Naive thymus-derived CD4-positive, alpha-beta T cell (primary cell): ENCODE measurements at regions of chr1 and their contacts with region 1.

Region 1: DNA sequence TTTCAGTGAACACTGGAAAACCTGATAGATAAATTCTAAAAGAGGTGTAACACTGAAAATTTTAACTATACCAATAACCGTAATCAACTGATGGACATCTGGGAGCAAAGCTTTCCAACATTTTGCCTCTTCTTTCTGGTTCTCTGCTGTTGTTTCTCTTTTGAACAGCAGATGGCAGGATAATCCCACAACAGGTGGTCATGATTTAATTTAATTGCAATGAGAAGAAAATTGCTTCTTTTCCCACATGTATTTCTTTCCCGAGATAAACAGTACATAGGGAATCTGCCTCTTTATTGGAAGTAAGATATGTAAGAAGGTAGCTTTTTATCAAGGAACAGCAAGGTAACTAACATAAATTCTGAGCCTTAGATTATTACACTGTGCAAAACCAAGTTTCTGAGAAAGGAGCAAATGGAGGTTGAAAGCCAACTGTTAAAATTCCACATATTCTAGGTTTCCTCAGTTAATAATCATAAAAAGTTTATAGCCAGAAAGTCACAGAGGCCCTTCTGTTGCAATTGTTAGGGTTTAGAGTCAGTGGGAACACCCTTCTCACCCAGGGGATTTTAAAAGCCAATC is 72.9 kb downstream of the RPS6KA1 start:
- DNase-seq: peak in 7 of 9 donors; percentile 43 to 73 (median 65)
- ATAC-seq: peak; percentile 71
- H3K4me3 ChIP-seq: no peak overlapping the region
- H3K4me3 Mint-ChIP-seq: peak overlapping the region in 1 of 10 donors; percentile 41
- H3K27ac ChIP-seq: no peak overlapping the region
- H3K27ac Mint-ChIP-seq: peak overlapping the region in 2 of 9 donors; percentile 21 to 72
- H3K4me1 ChIP-seq: peaks cover 0 to 3% of the 10 kb centered on the region in 2 donors
- H3K4me1 Mint-ChIP-seq: peaks cover 0 to 16% (median 9%) of the 10 kb centered on the region in 7 donors
- H3K27me3 ChIP-seq: no peaks in the 10 kb centered on the region
- H3K27me3 Mint-ChIP-seq: peaks cover 0 to 9% (median 0%) of the 10 kb centered on the region in 5 donors

Region 2: GRCh38 chr1:26210147-26210870 is 392.2 kb before region 1 on chr1:
- CTCF ChIA-PET with region 1: no interaction called
- POLR2A ChIA-PET with region 1: no interaction called
- intact Hi-C with region 1: no loop called
- DNase-seq: no peak
- ATAC-seq: no peak
- H3K4me3 ChIP-seq: no peak overlapping the region
- H3K4me3 Mint-ChIP-seq: no peak overlapping the region
- H3K27ac ChIP-seq: no peak overlapping the region
- H3K27ac Mint-ChIP-seq: no peak overlapping the region
- H3K4me1 ChIP-seq: no peaks in the 10 kb centered on the region
- H3K4me1 Mint-ChIP-seq: peaks cover 0 to 4% (median 0%) of the 10 kb centered on the region in 7 donors
- H3K27me3 ChIP-seq: no peaks in the 10 kb centered on the region
- H3K27me3 Mint-ChIP-seq: peaks cover 0 to 21% (median 0%) of the 10 kb centered on the region in 5 donors

Region 3: GRCh38 chr1:26541816-26542711 is 60.4 kb before region 1 on chr1:
- CTCF ChIA-PET with region 1: interaction called, 6 read pairs
- POLR2A ChIA-PET with region 1: no interaction called
- intact Hi-C with region 1: loop called in 1 of 2 experiments (anchors 5 kb)
- DNase-seq: peak; percentile 56 to 84 (median 66)
- ATAC-seq: peak; percentile 72
- H3K4me3 ChIP-seq: peak overlapping the region; percentile 33
- H3K4me3 Mint-ChIP-seq: peak overlapping the region; percentile 75 to 91 (median 84)
- H3K27ac ChIP-seq: peak overlapping the region; percentile 71
- H3K27ac Mint-ChIP-seq: peak overlapping the region; percentile 82 to 99 (median 96)
- H3K4me1 ChIP-seq: peaks cover 77 to 89% of the 10 kb centered on the region in 2 donors
- H3K4me1 Mint-ChIP-seq: peaks cover 80 to 94% (median 83%) of the 10 kb centered on the region in 7 donors
- H3K27me3 ChIP-seq: no peaks in the 10 kb centered on the region
- H3K27me3 Mint-ChIP-seq: no peaks in the 10 kb centered on the region

Region 4: GRCh38 chr1:26754086-26754874 is 151.8 kb after region 1 on chr1:
- CTCF ChIA-PET with region 1: no interaction called
- POLR2A ChIA-PET with region 1: no interaction called
- intact Hi-C with region 1: no loop called
- DNase-seq: no peak
- ATAC-seq: no peak
- H3K4me3 ChIP-seq: no peak overlapping the region
- H3K4me3 Mint-ChIP-seq: no peak overlapping the region
- H3K27ac ChIP-seq: no peak overlapping the region
- H3K27ac Mint-ChIP-seq: peak overlapping the region in 7 of 9 donors; percentile 5 to 78 (median 68)
- H3K4me1 ChIP-seq: peaks cover 5 to 11% of the 10 kb centered on the region in 2 donors
- H3K4me1 Mint-ChIP-seq: peaks cover 33 to 83% (median 66%) of the 10 kb centered on the region in 7 donors
- H3K27me3 ChIP-seq: no peaks in the 10 kb centered on the region
- H3K27me3 Mint-ChIP-seq: no peaks in the 10 kb centered on the region

Region 5: GRCh38 chr1:26811057-26811456 is 208.6 kb after region 1 on chr1:
- CTCF ChIA-PET with region 1: interaction called, 19 read pairs
- POLR2A ChIA-PET with region 1: no interaction called
- intact Hi-C with region 1: no loop called
- DNase-seq: no peak
- ATAC-seq: no peak
- H3K4me3 ChIP-seq: no peak overlapping the region
- H3K4me3 Mint-ChIP-seq: peak overlapping the region in 1 of 10 donors; percentile 39
- H3K27ac ChIP-seq: no peak overlapping the region
- H3K27ac Mint-ChIP-seq: peak overlapping the region in 2 of 9 donors; percentile 32 to 92
- H3K4me1 ChIP-seq: peaks cover 0 to 14% of the 10 kb centered on the region in 2 donors
- H3K4me1 Mint-ChIP-seq: peaks cover 0 to 26% (median 8%) of the 10 kb centered on the region in 7 donors
- H3K27me3 ChIP-seq: no peaks in the 10 kb centered on the region
- H3K27me3 Mint-ChIP-seq: no peaks in the 10 kb centered on the region

Region 6: DNA sequence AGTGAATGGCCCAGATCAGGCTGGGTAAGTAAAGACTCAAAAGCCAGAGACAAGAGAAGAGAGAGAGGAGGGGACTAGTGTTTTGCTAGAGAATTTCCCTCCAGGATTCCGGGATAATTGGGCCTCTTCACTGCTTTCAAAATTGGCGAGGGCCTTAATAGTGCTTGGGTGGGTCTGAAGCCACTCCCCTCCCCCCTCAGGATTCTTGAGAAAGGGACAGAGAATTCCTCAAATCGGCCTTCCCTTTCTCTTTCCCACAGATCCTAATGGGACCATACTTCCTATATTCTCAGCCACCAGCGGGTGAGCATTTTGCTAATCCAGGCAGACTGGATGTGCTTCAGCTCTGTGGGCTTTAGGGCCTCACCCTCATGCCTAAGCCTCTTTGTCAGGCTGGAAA is 272.4 kb after region 1 on chr1:
- CTCF ChIA-PET with region 1: interaction called, 8 read pairs
- POLR2A ChIA-PET with region 1: no interaction called
- intact Hi-C with region 1: loop called (anchors 1 to 2 kb)
- DNase-seq: no peak
- ATAC-seq: no peak
- H3K4me3 ChIP-seq: no peak overlapping the region
- H3K4me3 Mint-ChIP-seq: no peak overlapping the region
- H3K27ac ChIP-seq: no peak overlapping the region
- H3K27ac Mint-ChIP-seq: no peak overlapping the region
- H3K4me1 ChIP-seq: no peaks in the 10 kb centered on the region
- H3K4me1 Mint-ChIP-seq: peaks cover 0 to 3% (median 0%) of the 10 kb centered on the region in 7 donors
- H3K27me3 ChIP-seq: no peaks in the 10 kb centered on the region
- H3K27me3 Mint-ChIP-seq: no peaks in the 10 kb centered on the region